Activated CD4-positive, alpha-beta T cell treated with anti-CD3 and anti-CD28 coated beads for 36 hours (primary cell): ENCODE measurements at regions of chr19 and their contacts with region 1.

Region 1: DNA sequence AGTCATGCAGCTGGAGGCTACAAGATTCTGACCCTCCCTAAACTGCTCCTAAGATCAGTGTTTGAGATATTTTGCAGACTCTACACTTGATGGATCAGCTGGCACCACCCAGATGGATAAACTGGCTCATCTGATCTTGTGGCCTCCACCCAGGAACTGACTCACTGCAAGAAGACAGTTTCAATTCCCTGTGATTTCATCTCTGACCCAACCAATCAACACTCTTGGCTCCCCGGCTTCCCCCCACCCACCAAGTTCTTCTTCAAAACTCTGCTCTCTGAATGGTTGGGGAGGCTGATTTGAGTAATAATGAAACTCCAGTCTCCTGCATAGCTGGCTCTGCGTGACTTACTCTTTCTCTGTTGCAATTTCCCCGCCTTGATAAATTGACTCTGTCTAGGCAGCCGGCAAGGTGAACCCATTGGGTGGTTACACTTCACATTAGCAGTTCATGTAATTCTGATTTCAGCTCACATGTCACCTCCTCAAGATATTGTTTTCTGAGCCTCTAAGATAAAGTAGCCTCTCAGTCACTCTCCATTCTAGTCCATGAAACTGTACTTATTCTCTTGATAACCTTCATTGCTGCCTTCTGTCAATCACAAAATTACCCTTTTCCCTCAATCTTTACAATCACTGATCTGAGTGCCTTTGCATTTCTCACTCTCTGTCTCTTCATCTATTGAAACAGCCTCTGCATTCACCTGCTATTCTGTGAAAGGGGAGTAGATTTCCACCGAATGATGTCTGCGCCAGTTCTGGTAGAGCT is 9.9 kb upstream of the FPR3 start:
- DNase-seq: peak; percentile 87
- ATAC-seq: peak; percentile 97
- H3K4me3 Mint-ChIP-seq: no peak overlapping the region
- H3K27ac Mint-ChIP-seq: no peak overlapping the region
- H3K4me1 Mint-ChIP-seq: peaks cover 4% of the 10 kb centered on the region
- H3K27me3 Mint-ChIP-seq: peaks cover 16% of the 10 kb centered on the region

Region 2: DNA sequence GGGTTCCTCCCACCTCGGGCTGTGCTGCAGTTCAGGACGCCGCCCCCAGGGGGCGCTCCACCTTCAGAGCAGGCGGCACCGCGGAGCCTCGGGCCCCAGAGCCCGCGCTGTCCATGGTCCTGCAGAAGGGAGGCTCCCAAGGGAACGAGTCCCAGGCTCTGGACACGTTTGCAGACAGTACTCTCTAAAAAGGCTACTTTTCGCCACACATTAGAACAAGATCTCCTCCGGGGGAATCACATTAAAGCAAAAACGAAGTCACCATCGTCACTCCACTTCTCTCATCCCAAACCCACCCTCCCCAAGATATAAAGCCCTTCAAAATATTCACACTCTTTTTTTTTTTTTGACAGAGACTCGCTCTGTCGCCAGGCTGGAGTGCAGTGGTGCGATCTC is 363.1 kb before region 1 on chr19:
- CTCF ChIA-PET with region 1: no interaction called
- POLR2A ChIA-PET with region 1: no interaction called
- intact Hi-C with region 1: loop called in 1 of 2 experiments (anchors 2 kb)
- DNase-seq: peak; percentile 94
- ATAC-seq: peak; percentile 60
- H3K4me3 Mint-ChIP-seq: no peak overlapping the region
- H3K27ac Mint-ChIP-seq: no peak overlapping the region
- H3K4me1 Mint-ChIP-seq: peaks cover 24% of the 10 kb centered on the region
- H3K27me3 Mint-ChIP-seq: peaks cover 20% of the 10 kb centered on the region

Region 3: DNA sequence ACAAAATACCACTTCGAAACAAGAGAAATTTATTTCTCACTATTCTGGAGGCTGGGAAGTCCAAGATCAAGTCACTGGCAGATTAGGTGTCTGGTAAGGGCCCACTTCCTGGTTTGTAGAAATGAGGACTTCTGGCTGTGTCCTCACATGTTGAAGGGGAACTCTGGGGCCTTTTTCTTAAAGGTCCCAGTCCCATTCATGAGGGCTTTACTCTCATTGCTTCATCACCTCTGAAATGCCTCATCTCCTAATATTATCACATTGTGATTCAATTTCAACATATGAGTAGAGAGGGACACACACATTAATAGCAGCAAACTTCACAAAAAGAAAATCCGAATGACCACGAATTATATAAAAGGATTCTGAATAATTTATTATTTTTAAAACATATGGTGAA is 116.9 kb before region 1 on chr19:
- CTCF ChIA-PET with region 1: no interaction called
- POLR2A ChIA-PET with region 1: no interaction called
- intact Hi-C with region 1: loop called in 1 of 2 experiments (anchors 2 kb)
- DNase-seq: no peak
- ATAC-seq: no peak
- H3K4me3 Mint-ChIP-seq: no peak overlapping the region
- H3K27ac Mint-ChIP-seq: no peak overlapping the region
- H3K4me1 Mint-ChIP-seq: peaks cover 11% of the 10 kb centered on the region
- H3K27me3 Mint-ChIP-seq: peaks cover 18% of the 10 kb centered on the region

Region 4: GRCh38 chr19:51688672-51689571 is 96.2 kb before region 1 on chr19:
- CTCF ChIA-PET with region 1: no interaction called
- POLR2A ChIA-PET with region 1: no interaction called
- intact Hi-C with region 1: loop called in 1 of 2 experiments (anchors 1 kb)
- DNase-seq: peak; percentile 50
- ATAC-seq: no peak
- H3K4me3 Mint-ChIP-seq: peak overlapping the region; percentile 90
- H3K27ac Mint-ChIP-seq: peak overlapping the region; percentile 49
- H3K4me1 Mint-ChIP-seq: peaks cover 15% of the 10 kb centered on the region
- H3K27me3 Mint-ChIP-seq: no peaks in the 10 kb centered on the region

Region 5: GRCh38 chr19:51887522-51888498 is 102.7 kb after region 1 on chr19 and contains the start of gene ZNF577:
- CTCF ChIA-PET with region 1: no interaction called
- POLR2A ChIA-PET with region 1: no interaction called
- intact Hi-C with region 1: loop called in 1 of 2 experiments (anchors 1 kb)
- DNase-seq: peak; percentile 89
- ATAC-seq: peak; percentile 88
- H3K4me3 Mint-ChIP-seq: peak within 1 kb of the TSS; percentile 95
- H3K27ac Mint-ChIP-seq: peak within 1 kb of the TSS; percentile 92
- H3K4me1 Mint-ChIP-seq: peaks cover 12% of the 10 kb centered on the region
- H3K27me3 Mint-ChIP-seq: no peaks in the 10 kb centered on the region
- total RNA-seq, gene ZNF577: 5.7 to 7.2 TPM

Region 6: GRCh38 chr19:52171321-52172169 is 386.4 kb after region 1 on chr19 and contains the start of gene ZNF836:
- CTCF ChIA-PET with region 1: no interaction called
- POLR2A ChIA-PET with region 1: no interaction called
- intact Hi-C with region 1: no loop called
- DNase-seq: peak; percentile 96
- ATAC-seq: peak; percentile 96
- H3K4me3 Mint-ChIP-seq: peak within 1 kb of the TSS; percentile 87
- H3K27ac Mint-ChIP-seq: peak within 1 kb of the TSS; percentile 93
- H3K4me1 Mint-ChIP-seq: peaks cover 17% of the 10 kb centered on the region
- H3K27me3 Mint-ChIP-seq: no peaks in the 10 kb centered on the region
- total RNA-seq, gene ZNF836: 10.1 to 11.5 TPM